Ovary (tissue), 10 donors: ENCODE measurements at regions of chr2 and their contacts with region 1.

Region 1: GRCh38 chr2:114742245-114742644 is 299.8 kb downstream of the DPP10 start:
- DNase-seq: no peak
- H3K4me3 ChIP-seq: no peak overlapping the region
- H3K27ac ChIP-seq: no peak overlapping the region
- H3K4me1 ChIP-seq: no peaks in the 10 kb centered on the region
- H3K27me3 ChIP-seq: no peaks in the 10 kb centered on the region
- CTCF ChIP-seq: no peak
- EP300 ChIP-seq: no peak
- POLR2A ChIP-seq: no peak

Region 2: GRCh38 chr2:115057473-115057872 is 315.2 kb after region 1 on chr2:
- intact Hi-C with region 1: loop called in 1 of 4 experiments (anchors 5 kb)
- DNase-seq: no peak
- H3K4me3 ChIP-seq: no peak overlapping the region
- H3K27ac ChIP-seq: no peak overlapping the region
- H3K4me1 ChIP-seq: no peaks in the 10 kb centered on the region
- H3K27me3 ChIP-seq: no peaks in the 10 kb centered on the region
- CTCF ChIP-seq: no peak
- EP300 ChIP-seq: no peak
- POLR2A ChIP-seq: no peak